ENCODE measurements at regions of chr3 and their contacts with region 1.

Region 1: GRCh38 chr3:79361748-79362378 is 405.9 kb downstream of the ROBO1 start:
- DNase-seq: no peak
- ATAC-seq: no peak

Region 2: GRCh38 chr3:79086514-79086913 is 275.3 kb before region 1 on chr3:
- intact Hi-C with region 1: loop called (anchors 2 kb)
- DNase-seq: no peak
- ATAC-seq: no peak

Region 3: GRCh38 chr3:79175870-79176269 is 186.0 kb before region 1 on chr3:
- intact Hi-C with region 1: no loop called
- DNase-seq: no peak
- ATAC-seq: peak; percentile 28